WTC11 (cell line): ENCODE measurements at regions of chr9 and their contacts with region 1.

Region 1: DNA sequence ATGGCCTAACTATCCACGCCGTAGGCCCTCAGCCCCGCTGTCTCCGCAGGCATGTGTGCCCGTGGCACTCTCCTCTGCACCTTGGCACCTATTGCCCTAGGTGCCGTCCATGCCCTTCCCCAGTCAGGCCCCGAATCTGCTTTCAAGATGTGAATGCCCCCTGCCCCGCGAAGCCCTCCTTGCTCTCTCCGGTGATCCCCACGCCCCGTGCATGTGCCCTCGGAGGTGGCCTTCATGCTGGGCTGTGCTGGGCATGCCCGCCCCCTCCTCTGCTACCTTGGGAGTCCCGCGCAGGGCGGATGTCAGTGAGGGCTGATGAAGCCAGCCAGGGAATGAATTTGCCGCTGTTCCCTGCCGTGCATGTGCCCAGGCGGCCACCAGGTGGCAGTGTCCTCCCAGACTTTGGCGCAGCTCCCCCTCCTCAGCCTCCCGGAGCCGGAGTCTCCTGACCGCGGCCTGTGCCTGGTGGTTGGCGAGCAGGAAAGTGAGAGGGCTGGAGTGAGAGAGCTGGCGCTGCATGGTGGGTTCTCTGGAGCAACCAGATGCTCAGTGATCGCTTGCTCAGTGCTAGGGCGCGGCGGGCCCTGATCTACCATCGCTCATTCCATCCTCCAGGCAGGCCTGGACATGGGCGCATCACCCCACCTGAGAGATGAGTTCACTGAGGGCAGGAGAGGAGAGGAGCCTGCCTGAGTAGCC is 112.9 kb upstream of the LMX1B start:
- DNase-seq: peak; percentile 92
- ATAC-seq: peak; percentile 78
- H3K4me3 Mint-ChIP-seq: peak overlapping the region; percentile 77
- H3K27ac Mint-ChIP-seq: no peak overlapping the region
- H3K4me1 Mint-ChIP-seq: peaks cover 13% of the 10 kb centered on the region
- H3K27me3 Mint-ChIP-seq: peaks cover 12% of the 10 kb centered on the region
- CTCF ChIP-seq: peak; percentile 97

Region 2: GRCh38 chr9:126514047-126514821 is 13.4 kb after region 1 on chr9:
- CTCF ChIA-PET with region 1: interaction called, 149 read pairs
- POLR2A ChIA-PET with region 1: no interaction called
- DNase-seq: peak; percentile 86
- ATAC-seq: peak; percentile 85
- H3K4me3 Mint-ChIP-seq: peak overlapping the region; percentile 48
- H3K27ac Mint-ChIP-seq: no peak overlapping the region
- H3K4me1 Mint-ChIP-seq: peaks cover 34% of the 10 kb centered on the region
- H3K27me3 Mint-ChIP-seq: peaks cover 20% of the 10 kb centered on the region
- CTCF ChIP-seq: peak; percentile 56

Region 3: GRCh38 chr9:126550891-126551351 is 50.1 kb after region 1 on chr9:
- CTCF ChIA-PET with region 1: interaction called, 360 read pairs
- POLR2A ChIA-PET with region 1: no interaction called
- DNase-seq: no peak
- ATAC-seq: no peak
- H3K4me3 Mint-ChIP-seq: no peak overlapping the region
- H3K27ac Mint-ChIP-seq: no peak overlapping the region
- H3K4me1 Mint-ChIP-seq: no peaks in the 10 kb centered on the region
- H3K27me3 Mint-ChIP-seq: no peaks in the 10 kb centered on the region; the same call in 1 of the 2 replicates
- CTCF ChIP-seq: no peak

Region 4: DNA sequence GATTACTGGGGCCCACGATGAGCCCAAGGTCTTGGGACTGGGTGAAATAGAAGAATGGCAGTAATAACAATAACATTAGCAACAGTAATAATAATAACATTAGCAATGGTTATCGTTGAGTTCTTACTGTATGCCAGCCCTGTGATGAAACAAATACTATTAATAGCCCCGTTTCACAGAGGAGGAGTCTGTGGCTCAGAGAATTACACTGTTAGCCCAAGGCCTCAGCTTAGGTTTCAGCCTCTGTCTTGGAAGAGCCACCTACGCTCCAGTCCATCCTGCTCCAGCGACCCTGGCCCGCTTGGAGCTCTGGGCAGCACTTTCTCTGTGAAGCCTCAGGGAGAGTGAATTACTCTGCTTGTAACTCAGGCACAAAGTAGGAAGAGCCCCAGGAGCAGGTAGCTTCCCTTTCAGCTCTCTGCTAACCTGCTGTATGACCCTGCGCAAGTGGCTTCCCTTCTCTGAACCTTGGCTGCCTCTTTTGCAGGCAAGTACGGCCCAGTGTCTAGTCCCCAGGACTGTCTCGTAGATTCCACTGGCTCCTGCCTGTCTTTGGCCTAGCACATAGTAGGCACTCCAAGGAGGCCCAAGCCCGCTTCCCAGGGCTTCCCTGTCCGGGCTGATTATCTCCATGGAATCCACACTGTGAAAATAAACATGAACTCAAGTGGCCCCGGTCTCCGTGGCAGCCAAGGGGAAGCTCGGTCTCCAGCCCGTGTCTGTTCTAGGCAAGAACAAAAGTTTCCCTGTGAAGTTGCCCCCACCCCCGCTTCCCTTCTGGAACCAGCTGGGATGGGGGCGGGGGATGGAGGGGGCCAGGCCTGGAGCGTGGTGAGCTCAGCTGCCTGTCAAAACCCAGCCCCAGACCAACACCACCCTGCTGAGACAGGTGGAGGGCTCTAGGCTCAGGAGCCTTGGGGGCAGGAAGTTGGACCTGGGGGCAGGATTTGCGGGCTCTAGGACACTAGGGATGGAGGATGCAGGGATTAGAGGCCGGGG is 86.7 kb after region 1 on chr9:
- CTCF ChIA-PET with region 1: interaction called, 10 read pairs
- POLR2A ChIA-PET with region 1: no interaction called
- DNase-seq: peak; percentile 32
- ATAC-seq: peak; percentile 50
- H3K4me3 Mint-ChIP-seq: no peak overlapping the region
- H3K27ac Mint-ChIP-seq: no peak overlapping the region
- H3K4me1 Mint-ChIP-seq: peaks cover 19% of the 10 kb centered on the region
- H3K27me3 Mint-ChIP-seq: no peaks in the 10 kb centered on the region
- CTCF ChIP-seq: no peak

Region 5: DNA sequence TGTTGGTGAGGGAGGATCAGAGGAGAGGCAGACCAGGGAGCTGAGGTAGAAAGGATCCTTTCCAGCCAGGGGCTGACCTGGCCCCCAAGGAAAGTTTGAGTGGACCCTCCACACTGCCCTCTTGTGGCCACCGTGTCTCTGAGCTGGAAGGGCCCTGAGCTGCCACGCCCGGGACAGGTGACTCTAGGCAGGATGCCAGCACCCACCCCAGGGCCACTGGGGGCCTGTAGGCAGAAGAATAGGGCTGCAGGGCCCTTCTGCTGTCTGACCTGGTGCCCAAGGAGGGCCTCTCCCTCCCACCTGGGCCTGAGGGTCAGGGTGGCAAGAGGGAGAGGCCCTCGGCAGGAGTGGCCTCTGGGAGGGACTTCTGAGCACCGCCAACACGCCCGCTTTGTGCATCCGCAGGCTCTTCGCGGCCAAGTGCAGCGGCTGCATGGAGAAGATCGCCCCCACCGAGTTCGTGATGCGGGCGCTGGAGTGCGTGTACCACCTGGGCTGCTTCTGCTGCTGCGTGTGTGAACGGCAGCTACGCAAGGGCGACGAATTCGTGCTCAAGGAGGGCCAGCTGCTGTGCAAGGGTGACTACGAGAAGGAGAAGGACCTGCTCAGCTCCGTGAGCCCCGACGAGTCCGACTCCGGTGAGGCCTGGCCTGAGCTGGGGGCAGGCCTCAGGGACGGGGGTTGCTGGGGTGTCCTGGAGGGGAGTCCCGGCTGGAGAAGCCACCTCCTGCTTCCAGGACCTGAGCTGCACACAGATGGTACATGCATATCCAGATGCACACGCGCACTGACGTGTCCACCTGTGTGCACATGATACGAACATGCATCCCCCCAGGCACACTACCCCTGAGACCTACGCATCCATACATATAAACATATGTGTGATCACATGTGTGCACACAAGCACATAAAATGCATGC is 189.9 kb after region 1 on chr9:
- CTCF ChIA-PET with region 1: interaction called, 19 read pairs
- POLR2A ChIA-PET with region 1: no interaction called
- DNase-seq: peak; percentile 86
- ATAC-seq: peak; percentile 82
- H3K4me3 Mint-ChIP-seq: no peak overlapping the region
- H3K27ac Mint-ChIP-seq: no peak overlapping the region
- H3K4me1 Mint-ChIP-seq: peaks cover 19% of the 10 kb centered on the region
- H3K27me3 Mint-ChIP-seq: peaks cover 42% of the 10 kb centered on the region
- CTCF ChIP-seq: peak; percentile 80